ENCODE measurements at regions of chr6 and their contacts with region 1.

Region 1: GRCh38 chr6:119349323-119350042 is at the start of gene MAN1A1:
- DNase-seq: peak; percentile 81 to 91
- H3K4me3 ChIP-seq: peak within 1 kb of the TSS; percentile 81
- H3K4me3 Mint-ChIP-seq: peak within 1 kb of the TSS; percentile 81
- H3K27ac Mint-ChIP-seq: peak within 1 kb of the TSS; percentile 80
- H3K4me1 ChIP-seq: peaks cover 12% of the 10 kb centered on the region
- H3K4me1 Mint-ChIP-seq: peaks cover 6% of the 10 kb centered on the region
- H3K27me3 ChIP-seq: no peaks in the 10 kb centered on the region
- H3K27me3 Mint-ChIP-seq: peaks cover 8% of the 10 kb centered on the region
- CTCF ChIP-seq: no peak
- total RNA-seq, gene MAN1A1: 28.7 and 28.9 TPM in 2 replicates

Region 2: DNA sequence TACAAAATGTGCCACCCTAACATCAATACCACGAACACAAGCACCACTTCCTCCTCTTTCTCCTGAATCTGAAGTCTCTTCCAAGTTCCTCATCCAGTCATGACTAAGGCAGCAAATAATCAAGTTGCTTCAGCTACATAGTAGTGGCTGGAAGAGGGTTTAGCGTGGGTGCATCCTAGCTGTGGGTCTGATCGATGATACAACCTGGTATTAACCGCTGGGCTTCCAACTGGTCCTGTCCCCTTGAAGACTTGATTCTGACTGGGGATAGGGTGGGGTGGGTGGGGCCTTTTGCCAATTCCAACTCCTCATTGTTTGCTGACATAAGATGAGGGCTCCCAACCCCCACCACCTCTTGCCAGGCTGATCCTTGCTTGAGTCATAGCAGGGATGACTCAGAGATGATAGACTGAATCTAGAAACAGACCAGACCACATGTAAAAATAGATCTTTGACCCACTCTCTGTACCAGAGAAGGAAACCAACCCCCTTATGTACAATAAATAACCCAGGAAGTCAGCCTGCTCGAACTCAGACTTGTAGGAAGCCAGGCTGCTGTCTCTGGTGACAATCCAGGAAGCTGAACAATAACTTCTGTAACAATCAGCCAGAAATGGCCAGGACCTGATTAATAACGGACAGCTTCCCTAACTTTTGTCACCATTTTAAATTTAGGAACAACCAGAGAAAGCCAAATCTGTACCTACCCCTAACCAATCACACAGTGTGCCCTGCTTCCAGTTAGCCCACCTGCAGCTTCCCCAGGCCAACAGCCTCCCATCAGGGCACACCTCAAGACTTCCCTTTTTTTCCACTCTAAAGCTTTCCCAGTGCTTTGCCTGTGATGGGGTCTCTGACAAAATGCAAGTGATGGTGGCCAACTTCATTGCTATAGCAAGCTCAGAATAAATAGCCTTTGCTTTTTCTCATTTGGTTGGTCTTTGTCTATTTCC is 202.1 kb before region 1 on chr6:
- CTCF ChIA-PET with region 1: interaction called, 13 read pairs
- POLR2A ChIA-PET with region 1: interaction called, 5 read pairs
- intact Hi-C with region 1: loop called (anchors 2 kb)
- DNase-seq: peak; percentile 21 to 53
- H3K4me3 ChIP-seq: no peak overlapping the region
- H3K4me3 Mint-ChIP-seq: no peak overlapping the region
- H3K27ac Mint-ChIP-seq: peak overlapping the region; percentile 66
- H3K4me1 ChIP-seq: peaks cover 18% of the 10 kb centered on the region
- H3K4me1 Mint-ChIP-seq: peaks cover 22% of the 10 kb centered on the region
- H3K27me3 ChIP-seq: no peaks in the 10 kb centered on the region
- H3K27me3 Mint-ChIP-seq: no peaks in the 10 kb centered on the region
- CTCF ChIP-seq: no peak

Region 3: GRCh38 chr6:119313937-119314884 is 35.3 kb before region 1 on chr6:
- CTCF ChIA-PET with region 1: no interaction called
- POLR2A ChIA-PET with region 1: interaction called, 3 read pairs
- intact Hi-C with region 1: loop called (anchors 2 kb)
- DNase-seq: no peak
- H3K4me3 ChIP-seq: no peak overlapping the region
- H3K4me3 Mint-ChIP-seq: no peak overlapping the region
- H3K27ac Mint-ChIP-seq: no peak overlapping the region
- H3K4me1 ChIP-seq: peaks cover 20% of the 10 kb centered on the region
- H3K4me1 Mint-ChIP-seq: peaks cover 30% of the 10 kb centered on the region
- H3K27me3 ChIP-seq: no peaks in the 10 kb centered on the region
- H3K27me3 Mint-ChIP-seq: no peaks in the 10 kb centered on the region
- CTCF ChIP-seq: no peak

Region 4: GRCh38 chr6:119384444-119384843 is 35.0 kb after region 1 on chr6:
- CTCF ChIA-PET with region 1: no interaction called
- POLR2A ChIA-PET with region 1: no interaction called
- intact Hi-C with region 1: loop called (anchors 2 kb)
- DNase-seq: no peak
- H3K4me3 ChIP-seq: no peak overlapping the region
- H3K4me3 Mint-ChIP-seq: no peak overlapping the region
- H3K27ac Mint-ChIP-seq: no peak overlapping the region
- H3K4me1 ChIP-seq: peaks cover 14% of the 10 kb centered on the region
- H3K4me1 Mint-ChIP-seq: peaks cover 10% of the 10 kb centered on the region
- H3K27me3 ChIP-seq: no peaks in the 10 kb centered on the region
- H3K27me3 Mint-ChIP-seq: no peaks in the 10 kb centered on the region
- CTCF ChIP-seq: no peak

Region 5: GRCh38 chr6:119476554-119476953 is 127.1 kb after region 1 on chr6:
- CTCF ChIA-PET with region 1: no interaction called
- POLR2A ChIA-PET with region 1: no interaction called
- intact Hi-C with region 1: loop called (anchors 10 kb)
- DNase-seq: no peak
- H3K4me3 ChIP-seq: no peak overlapping the region
- H3K4me3 Mint-ChIP-seq: no peak overlapping the region
- H3K27ac Mint-ChIP-seq: no peak overlapping the region
- H3K4me1 ChIP-seq: no peaks in the 10 kb centered on the region
- H3K4me1 Mint-ChIP-seq: no peaks in the 10 kb centered on the region
- H3K27me3 ChIP-seq: no peaks in the 10 kb centered on the region
- H3K27me3 Mint-ChIP-seq: peaks cover 14% of the 10 kb centered on the region
- CTCF ChIP-seq: no peak

Region 6: GRCh38 chr6:119535332-119535731 is 185.8 kb after region 1 on chr6:
- CTCF ChIA-PET with region 1: no interaction called
- POLR2A ChIA-PET with region 1: no interaction called
- intact Hi-C with region 1: loop called (anchors 5 kb)
- DNase-seq: no peak
- H3K4me3 ChIP-seq: no peak overlapping the region
- H3K4me3 Mint-ChIP-seq: no peak overlapping the region
- H3K27ac Mint-ChIP-seq: no peak overlapping the region
- H3K4me1 ChIP-seq: no peaks in the 10 kb centered on the region
- H3K4me1 Mint-ChIP-seq: no peaks in the 10 kb centered on the region
- H3K27me3 ChIP-seq: no peaks in the 10 kb centered on the region
- H3K27me3 Mint-ChIP-seq: peaks cover 15% of the 10 kb centered on the region
- CTCF ChIP-seq: no peak

Region 7: DNA sequence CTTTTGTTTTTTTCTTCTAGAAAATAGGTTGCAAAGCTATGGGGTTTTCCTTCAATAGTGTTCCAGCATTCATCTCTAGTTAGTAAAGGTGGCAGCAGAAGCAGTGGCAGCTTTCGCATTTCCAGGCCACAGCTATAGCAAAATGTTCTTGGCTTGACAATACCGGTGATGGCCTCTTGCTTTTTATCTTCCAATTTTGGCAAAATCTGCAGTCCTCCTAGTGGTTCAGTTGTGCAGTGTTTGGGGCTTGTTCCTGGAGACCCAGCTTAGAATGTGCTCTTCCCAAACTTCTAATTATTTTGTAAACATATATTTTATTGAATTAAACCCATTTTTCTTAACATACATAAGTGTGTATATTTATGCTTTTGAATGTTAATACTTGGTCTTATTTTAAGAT is 370.7 kb after region 1 on chr6:
- CTCF ChIA-PET with region 1: no interaction called
- POLR2A ChIA-PET with region 1: no interaction called
- intact Hi-C with region 1: loop called (anchors 1 kb)
- DNase-seq: peak in 1 of 2 experiments; percentile 11
- H3K4me3 ChIP-seq: no peak overlapping the region
- H3K4me3 Mint-ChIP-seq: no peak overlapping the region
- H3K27ac Mint-ChIP-seq: no peak overlapping the region
- H3K4me1 ChIP-seq: no peaks in the 10 kb centered on the region
- H3K4me1 Mint-ChIP-seq: no peaks in the 10 kb centered on the region
- H3K27me3 ChIP-seq: no peaks in the 10 kb centered on the region; the same call in 1 of the 2 replicates
- H3K27me3 Mint-ChIP-seq: peaks cover 19% of the 10 kb centered on the region
- CTCF ChIP-seq: peak in 1 of 2 experiments; percentile 16

Region 8: GRCh38 chr6:119856136-119856535 is 506.7 kb after region 1 on chr6:
- CTCF ChIA-PET with region 1: no interaction called
- POLR2A ChIA-PET with region 1: no interaction called
- intact Hi-C with region 1: no loop called
- DNase-seq: no peak
- H3K4me3 ChIP-seq: no peak overlapping the region
- H3K4me3 Mint-ChIP-seq: no peak overlapping the region
- H3K27ac Mint-ChIP-seq: no peak overlapping the region
- H3K4me1 ChIP-seq: no peaks in the 10 kb centered on the region
- H3K4me1 Mint-ChIP-seq: no peaks in the 10 kb centered on the region
- H3K27me3 ChIP-seq: no peaks in the 10 kb centered on the region
- H3K27me3 Mint-ChIP-seq: no peaks in the 10 kb centered on the region
- CTCF ChIP-seq: no peak